SK-N-SH (cell line): ENCODE measurements at regions of chr3 and their contacts with region 1.

Region 1: DNA sequence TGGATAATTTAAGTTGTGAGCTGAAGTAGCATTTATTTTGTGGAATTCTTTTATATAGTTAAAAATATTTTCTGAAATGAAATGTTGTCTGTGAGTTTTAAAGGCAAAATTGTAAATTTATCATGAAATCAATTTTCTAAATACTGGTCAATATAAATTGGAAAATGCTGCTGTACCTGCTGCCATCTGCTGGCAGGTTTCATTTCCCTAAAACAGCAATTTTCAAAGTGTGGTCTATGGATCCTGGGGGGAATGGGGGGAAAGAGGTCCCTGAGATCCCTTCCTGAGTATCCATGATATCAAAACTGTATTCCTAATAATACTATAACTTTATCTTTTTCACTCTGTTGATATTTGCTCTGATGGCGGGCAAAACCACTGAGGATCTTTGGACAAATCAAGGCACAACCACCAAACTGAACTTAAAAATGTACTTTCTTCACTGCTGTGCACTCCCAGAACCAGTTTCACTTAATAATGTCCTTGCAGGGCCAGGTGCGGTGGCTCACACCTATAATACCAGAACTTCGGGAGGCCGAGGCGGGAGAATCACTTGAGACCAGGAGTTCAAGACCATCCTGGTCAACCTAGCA is 17.2 kb upstream of the CCR4 start:
- DNase-seq: peak; percentile 57
- H3K4me3 ChIP-seq: no peak overlapping the region; a peak in 1 of 4 replicates
- H3K27ac ChIP-seq: no peak overlapping the region
- H3K4me1 ChIP-seq: no peaks in the 10 kb centered on the region
- H3K27me3 ChIP-seq: no peaks in the 10 kb centered on the region
- CTCF ChIP-seq: peak; percentile 91
- EP300 ChIP-seq: no peak
- RAD21 ChIP-seq: peak; percentile 79

Region 2: DNA sequence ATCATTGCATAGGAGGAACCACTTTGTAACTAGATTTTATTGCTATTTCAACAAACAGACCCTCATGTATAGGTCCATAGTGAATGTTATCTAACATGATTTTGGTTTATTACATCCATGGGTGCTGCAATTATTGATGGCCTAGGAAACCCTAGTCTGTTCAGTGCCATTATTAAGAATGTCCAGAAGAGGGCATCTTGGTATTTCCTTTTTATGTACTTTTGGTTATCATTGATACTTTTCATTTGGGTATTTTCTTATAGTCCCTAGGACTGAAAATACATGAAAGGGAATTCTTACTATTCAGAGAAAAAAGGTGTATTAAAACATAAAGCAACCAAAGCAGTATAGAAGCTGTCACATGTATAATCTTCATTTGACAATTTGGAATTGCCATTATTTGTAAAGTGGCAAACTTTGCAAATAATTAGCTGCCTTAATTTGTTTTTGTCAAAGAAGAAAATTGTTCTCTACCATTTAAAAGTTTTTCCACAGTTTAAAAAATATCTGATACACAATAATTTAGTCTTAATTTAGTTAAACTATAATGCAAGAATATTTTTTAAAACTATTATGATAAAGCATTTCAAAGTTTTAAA is 200.5 kb before region 1 on chr3:
- CTCF ChIA-PET with region 1: interaction called, 27 read pairs
- POLR2A ChIA-PET with region 1: no interaction called
- DNase-seq: peak; percentile 56
- H3K4me3 ChIP-seq: no peak overlapping the region; a peak in 1 of 4 replicates
- H3K27ac ChIP-seq: no peak overlapping the region
- H3K4me1 ChIP-seq: no peaks in the 10 kb centered on the region
- H3K27me3 ChIP-seq: no peaks in the 10 kb centered on the region
- CTCF ChIP-seq: peak; percentile 77
- EP300 ChIP-seq: no peak
- RAD21 ChIP-seq: peak; percentile 70